ENCODE measurements at regions of chr14 and their contacts with region 1.

Region 1: DNA sequence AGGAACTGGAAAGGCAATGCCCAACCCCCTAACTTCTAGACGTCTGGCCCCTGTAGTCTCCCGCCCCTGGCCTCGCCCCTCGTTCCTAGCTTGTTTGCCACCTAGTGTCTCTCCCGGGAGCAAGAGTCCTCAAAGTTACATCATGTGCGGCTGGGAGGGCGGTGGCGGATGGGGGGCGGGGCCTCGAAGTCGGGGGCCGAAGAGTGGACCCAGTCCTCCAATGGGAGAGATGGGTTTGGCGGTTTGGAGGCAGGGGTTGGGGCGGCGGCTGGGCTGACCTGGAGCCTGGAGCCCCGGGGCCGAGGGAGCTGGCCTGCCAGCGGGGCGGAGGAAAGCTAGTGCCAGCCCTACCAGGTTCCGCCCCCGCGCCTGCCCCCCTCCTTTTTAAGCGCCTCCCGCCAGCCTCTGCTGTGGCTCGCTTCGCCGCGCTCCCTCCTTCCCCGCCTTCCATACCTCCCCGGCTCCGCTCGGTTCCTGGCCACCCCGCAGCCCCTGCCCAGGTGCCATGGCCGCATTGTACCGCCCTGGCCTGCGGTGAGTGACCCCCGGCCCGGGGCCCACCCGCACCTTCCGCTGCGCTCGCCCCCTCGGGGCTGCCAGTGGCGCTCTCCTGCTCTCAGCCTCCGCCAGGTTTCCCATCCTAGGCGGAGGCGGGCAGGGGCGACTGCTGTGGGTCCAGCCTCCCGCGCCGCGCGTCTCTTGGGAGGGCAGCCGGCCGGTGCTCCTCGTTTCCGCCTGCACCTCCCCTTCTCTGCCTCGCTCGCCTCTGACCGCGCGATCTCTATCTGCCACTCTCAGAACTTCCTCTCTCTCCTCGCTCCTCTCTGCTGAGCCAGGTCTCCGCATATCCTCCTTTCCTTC is at the start of gene PCK2:
- DNase-seq: peak; percentile 86

Region 2: GRCh38 chr14:24051789-24052655 is 42.1 kb before region 1 on chr14 and contains the start of gene CARMIL3:
- CTCF ChIA-PET with region 1: interaction called, 153 read pairs
- POLR2A ChIA-PET with region 1: interaction called, 73 read pairs
- DNase-seq: peak; percentile 77

Region 3: GRCh38 chr14:24064091-24064749 is 29.9 kb before region 1 on chr14:
- CTCF ChIA-PET with region 1: interaction called, 153 read pairs
- POLR2A ChIA-PET with region 1: interaction called, 20 read pairs
- DNase-seq: no peak

Region 4: DNA sequence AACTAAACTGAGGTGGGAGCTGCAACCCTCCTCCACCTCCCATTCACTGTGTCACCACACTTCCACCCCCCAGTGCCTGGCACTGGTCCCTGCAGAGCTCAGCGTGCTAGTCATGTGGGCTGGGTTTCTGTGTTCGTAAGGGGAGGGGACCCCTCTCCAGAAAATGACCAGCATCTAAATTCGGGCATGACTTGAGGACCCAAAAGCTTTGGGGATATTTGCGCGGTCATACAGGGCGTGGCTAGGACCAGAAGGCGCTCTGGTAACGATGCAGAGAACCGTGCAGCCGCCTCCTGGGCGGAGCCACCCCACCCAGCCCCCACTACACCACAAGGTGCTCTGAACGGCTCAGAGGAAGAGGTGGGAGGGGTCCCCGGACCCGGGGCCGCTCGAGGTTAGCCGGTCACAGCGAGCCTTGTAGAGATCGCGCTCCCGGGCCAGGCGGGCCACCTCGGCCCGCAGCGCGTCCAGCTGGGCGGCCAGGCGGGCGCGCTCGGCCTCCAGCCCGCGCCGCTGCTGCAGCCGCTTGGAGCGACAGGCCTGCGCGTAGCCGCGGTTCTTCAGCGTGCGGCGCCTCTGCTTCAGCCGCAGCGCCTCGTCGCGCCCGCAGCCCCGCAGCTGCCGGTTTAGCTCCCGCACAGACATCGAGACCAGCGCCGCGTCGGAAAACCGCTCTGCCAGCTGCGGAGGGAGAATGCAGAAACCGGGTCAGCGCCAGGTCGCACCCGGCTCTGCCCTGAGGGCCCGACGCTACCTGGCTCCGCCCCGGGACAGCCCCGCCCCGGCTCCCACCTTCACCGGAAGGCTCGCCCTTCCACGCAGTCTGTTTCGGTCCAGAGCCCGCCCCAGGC is 13.0 kb before region 1 on chr14:
- CTCF ChIA-PET with region 1: interaction called, 36 read pairs
- POLR2A ChIA-PET with region 1: interaction called, 76 read pairs
- DNase-seq: peak; percentile 62

Region 5: DNA sequence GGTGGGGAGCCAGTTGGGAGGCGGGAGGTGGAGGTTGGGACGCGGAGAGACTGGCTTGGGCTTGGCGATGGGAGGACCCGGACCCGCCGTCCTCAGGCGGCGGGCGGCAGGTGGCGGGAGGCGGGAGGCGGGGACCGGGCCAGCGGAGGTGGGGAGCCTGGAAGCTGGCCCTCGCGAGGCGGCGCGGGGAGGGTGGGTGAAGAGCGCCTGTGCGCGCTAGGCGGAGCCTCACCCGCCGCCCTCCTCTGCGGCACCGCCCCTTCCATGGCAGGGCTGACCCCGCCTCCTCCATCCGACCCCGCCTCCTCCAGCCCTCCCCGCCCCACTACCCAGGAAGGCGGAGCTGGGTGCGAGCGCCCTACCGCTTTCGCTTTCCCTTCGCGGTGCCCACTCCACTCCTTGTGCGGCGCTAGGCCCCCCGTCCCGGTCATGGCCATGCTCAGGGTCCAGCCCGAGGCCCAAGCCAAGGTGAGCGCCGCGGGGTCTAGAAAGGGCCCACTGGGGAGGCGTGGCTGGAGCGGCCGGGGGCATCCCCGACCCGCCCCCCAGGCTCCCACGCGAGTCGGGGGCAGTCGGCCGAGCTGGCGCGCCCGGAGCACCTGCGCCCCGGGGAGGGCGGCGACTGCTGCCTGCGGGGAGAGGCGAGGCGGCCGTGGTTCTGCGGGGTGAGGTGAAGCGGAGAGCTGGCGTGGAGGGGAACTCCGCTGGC is 41.9 kb after region 1 on chr14 and contains the start of gene PSME1:
- CTCF ChIA-PET with region 1: interaction called, 5 read pairs
- POLR2A ChIA-PET with region 1: interaction called, 25 read pairs
- DNase-seq: peak; percentile 91

Region 6: DNA sequence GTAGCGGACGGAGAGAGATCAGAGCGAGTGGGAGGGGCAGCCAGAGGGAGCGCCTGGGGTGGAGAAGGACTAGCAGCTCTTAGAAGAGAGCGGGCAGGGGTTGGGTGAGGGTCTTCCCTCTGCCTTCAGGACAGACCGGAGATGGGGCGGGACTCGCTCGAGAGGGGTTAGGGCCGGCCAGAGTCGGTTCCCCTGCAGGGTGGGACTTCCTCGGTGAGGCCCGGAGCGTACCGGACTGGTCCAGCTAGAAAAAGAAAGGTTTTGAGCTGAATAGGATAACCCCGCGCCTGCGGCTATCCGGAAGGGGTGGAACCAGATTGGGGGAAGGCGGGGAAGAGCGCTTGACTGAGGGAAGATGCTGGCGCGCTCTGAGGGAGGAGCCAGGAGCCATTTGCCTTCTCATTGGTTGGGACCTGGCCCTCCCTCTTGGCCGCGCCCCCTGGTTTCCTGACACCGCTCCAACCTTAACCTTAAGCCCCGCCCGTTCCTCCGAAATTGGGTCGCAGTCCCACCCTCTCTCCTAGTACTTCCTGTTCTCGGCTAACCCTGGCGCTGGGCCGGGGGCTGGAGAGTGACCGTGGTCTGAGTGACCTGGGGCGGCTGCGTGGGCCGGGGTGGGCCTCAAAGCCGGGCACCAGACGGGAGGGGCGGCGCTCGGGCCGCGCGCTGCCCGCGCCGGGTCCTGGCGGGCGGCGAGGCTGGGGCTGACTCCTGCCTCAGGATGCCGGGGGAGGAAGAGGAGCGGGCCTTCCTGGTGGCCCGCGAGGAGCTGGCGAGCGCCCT is 53.0 kb after region 1 on chr14 and contains the start of gene RNF31:
- CTCF ChIA-PET with region 1: no interaction called
- POLR2A ChIA-PET with region 1: interaction called, 13 read pairs
- DNase-seq: peak; percentile 94

Region 7: GRCh38 chr14:24189460-24189859 is 95.3 kb after region 1 on chr14:
- CTCF ChIA-PET with region 1: no interaction called
- POLR2A ChIA-PET with region 1: no interaction called
- DNase-seq: no peak

Region 8: GRCh38 chr14:24224618-24225071 is 130.5 kb after region 1 on chr14:
- CTCF ChIA-PET with region 1: no interaction called
- POLR2A ChIA-PET with region 1: no interaction called
- DNase-seq: no peak

Measured in HEK293T (cell line).